Head of caudate nucleus (tissue), 42 donors: ENCODE measurements at regions of chr16 and their contacts with region 1.

Region 1: GRCh38 chr16:14325502-14326401 is 254.6 kb downstream of the MRTFB start:
- DNase-seq: no peak

Region 2: GRCh38 chr16:14389359-14389758 is 63.6 kb after region 1 on chr16:
- intact Hi-C with region 1: loop called (anchors 10 kb)
- DNase-seq: peak in 17 of 42 donors; percentile 6 to 64 (median 31)